ENCODE measurements at regions of chr20 and their contacts with region 1.

Region 1: DNA sequence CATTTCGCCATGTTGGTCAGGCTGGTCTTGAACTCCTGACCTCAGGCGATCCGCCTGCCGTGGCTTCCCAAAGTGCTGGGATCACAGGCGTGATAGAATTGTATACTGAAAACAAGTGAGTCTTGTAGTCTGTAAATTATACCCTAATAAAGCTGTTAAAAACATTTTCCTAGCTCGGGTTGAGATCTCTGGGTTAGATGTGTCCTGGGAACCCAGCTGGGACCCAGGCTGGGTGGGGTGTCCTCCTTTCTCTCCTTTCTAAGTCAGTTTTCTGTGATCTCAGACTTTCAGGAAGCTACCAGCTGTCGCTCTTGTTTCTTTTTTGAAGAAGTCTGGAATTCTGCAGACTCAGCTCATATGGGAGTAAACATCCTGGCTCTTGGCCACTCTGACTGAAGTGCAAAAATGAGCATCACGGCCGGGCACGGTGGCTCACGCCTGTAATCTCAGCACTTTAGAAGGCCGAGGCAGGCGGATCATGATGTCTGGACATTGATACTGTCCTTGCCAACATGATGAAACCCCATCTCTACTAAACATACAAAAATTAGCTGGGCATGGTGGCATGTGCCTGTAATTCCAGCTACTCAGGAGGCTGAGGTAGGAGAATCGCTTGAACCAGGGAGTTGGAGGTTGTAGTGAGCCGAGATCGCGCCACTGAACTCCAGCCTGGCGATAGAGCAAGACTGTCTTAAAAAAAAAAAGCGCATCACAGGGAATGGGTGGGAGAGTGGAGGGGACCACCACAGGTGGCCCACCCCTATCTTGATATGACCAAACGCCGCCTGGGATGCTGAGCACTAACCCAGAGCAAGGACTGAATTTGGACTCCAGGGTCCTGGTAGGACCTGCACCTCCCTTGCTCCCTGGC is 9.9 kb upstream of the PCIF1 start:
- DNase-seq: no peak
- ATAC-seq: no peak
- H3K4me3 ChIP-seq: no peak overlapping the region
- H3K27ac ChIP-seq: no peak overlapping the region
- H3K4me1 ChIP-seq: peaks cover 6 to 10% of the 10 kb centered on the region in 2 experiments; a peak in 4 of 5 replicates
- H3K27me3 ChIP-seq: no peaks in the 10 kb centered on the region; a peak in 1 of 5 replicates
- CTCF ChIP-seq: no peak
- EP300 ChIP-seq: no peak
- POLR2A ChIP-seq: no peak
- RAD21 ChIP-seq: no peak

Region 2: DNA sequence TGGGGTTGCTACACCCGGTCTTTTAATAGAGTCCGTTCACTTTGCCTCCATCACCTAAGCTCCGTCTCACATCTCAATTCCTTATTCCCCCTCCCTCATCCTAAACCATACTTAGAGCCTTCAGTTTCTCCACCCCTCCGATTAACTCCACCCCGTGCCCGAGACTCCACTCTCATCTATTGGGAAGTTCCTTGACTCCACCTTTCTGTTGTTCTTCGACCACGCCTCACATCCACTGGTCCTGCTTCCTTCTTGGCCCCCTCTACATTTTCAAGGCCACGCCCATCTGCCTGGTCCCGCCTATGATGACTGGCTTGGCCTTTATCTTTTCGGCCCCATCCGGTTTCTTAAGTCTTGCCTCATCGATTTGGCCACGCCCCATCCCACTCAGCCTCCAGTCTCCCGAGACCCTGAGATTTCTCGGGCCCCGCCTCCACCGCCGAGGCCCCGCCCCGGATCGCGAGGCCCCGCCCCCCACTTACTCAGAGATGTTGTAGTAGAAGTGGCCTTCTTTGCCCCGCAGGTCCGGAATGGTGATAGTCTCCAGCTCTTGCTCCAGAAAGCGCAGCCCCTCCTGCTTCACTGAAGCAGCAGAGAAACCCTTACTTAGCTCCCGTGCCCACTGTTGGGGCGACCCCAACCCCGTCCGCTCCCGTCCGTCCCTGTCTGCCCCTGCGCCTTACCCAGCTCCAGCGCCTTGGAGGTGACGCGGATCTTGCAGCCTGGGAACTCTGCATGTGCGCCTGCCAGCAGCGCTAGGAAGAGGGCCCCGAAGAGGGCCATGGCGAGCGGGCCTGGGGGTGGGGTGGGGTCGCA is 13.7 kb before region 1 on chr20:
- CTCF ChIA-PET with region 1: no interaction called
- POLR2A ChIA-PET with region 1: interaction called, 11 read pairs
- in situ Hi-C with region 1: no loop called
- intact Hi-C with region 1: no loop called
- DNase-seq: peak; percentile 98 to 100 (median 98)
- ATAC-seq: peak; percentile 95
- H3K4me3 ChIP-seq: peak overlapping the region; percentile 48
- H3K27ac ChIP-seq: peak overlapping the region; percentile 89
- H3K4me1 ChIP-seq: peaks cover 24 to 44% of the 10 kb centered on the region in 2 experiments
- H3K27me3 ChIP-seq: no peaks in the 10 kb centered on the region
- CTCF ChIP-seq: no peak
- EP300 ChIP-seq: peak; percentile 82
- POLR2A ChIP-seq: peak; percentile 92
- RAD21 ChIP-seq: no peak

Measured in K562 (cell line).